Posterior vena cava (tissue), 2 donors: ENCODE measurements at regions of chr10 and their contacts with region 1.

Region 1: GRCh38 chr10:61744469-61744868 is 81.7 kb downstream of the CABCOCO1 start:
- DNase-seq: no peak

Region 2: DNA sequence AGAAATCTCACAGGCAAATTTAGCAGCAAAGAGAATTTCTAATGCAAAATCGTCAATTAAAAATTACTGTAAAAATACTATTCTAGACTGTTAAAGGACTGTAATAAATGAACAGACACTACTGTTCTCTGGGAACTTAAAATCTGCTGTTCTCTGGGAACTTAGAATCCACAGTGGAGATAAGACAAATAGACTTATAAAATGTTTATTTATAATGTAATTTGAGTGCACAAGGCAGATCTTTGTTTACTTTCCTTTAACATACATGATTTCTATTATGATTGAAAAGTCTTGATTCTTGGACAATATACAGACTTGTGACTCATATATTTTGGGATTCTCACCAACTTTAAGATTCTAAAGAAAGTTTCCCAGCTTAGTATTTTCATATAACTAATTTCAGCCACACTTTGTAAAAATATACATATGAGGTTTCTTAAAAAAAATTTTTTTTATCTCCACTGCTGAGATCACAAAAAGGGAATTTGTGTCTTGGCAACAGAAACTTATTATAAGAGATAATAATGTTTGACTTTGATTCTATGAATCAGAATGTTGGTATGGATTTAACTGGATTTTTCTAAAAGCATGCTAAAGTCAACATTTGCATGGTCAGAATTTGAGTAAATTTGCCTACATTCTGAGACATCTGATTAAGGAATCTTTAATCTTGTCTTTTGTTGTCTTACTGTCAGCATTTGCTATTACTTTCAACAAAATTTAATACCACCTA is 634.1 kb before region 1 on chr10:
- intact Hi-C with region 1: no loop called
- DNase-seq: no peak

Region 3: DNA sequence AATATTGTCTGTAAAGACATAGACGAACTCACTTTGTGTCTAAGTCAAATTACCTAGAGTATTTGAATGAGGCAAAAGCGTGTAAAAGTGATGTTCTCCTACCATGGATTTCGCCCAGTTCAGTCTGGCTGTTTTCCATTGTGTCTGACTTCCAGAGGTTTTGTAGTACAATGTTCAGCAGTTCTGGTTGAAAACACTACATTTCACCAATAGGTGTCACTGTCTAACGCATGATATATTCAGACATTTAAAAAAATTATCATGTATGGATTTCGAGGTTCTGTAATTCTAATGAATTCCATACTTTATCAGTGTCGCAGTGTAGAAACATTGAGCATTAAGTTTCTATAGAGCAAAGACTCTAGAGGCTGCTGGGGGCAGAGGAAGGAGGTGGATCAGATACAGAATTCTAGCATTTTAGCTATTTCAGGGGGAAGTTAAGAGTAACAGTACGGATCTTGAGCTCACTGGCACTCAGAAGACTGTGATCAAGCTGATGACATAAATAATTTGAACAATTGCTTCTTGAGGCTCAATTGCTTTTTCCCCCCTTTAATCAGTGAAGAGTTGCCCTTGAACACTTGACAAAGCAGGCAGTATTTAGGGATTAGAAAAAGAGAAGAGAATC is 603.6 kb before region 1 on chr10:
- intact Hi-C with region 1: loop called in 1 of 2 experiments (anchors 10 kb)
- DNase-seq: no peak